ENCODE measurements at regions of chr1 and their contacts with region 1.

Region 1: DNA sequence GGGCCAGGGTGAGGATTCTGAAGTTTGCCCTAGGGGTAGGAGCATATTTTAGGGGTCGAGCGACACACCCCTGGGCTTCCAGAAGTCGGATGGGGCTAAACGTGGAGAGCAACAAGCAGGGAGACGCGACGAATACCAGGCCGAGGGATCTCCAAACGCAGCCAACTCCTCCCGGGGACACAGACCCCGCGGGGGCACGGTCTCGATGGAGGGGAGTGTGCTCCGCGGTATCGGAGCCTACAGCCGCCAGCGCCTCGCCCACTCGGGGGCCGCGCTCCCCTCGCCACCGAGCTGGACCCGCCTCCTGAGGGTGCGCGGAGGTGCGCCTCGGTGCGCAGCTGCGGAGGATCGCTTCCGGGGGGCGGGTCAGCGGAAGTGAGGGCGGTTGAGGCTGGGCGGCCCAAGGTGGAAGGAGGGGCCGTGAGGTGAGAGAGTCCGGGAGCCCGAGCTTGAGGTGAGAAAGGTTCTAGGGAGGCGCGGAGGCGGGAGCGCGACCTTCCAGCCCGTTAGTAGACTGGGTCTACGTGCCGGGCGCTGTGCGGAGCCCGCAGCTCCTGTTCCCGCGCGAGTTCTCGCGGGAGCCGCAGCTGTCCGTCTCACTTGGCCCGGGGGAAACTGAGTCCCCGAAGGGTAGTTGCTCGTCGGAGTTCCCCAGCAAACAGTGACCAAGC is at the start of gene MTFR1L:
- DNase-seq: peak; percentile 92 to 95 (median 95)
- ATAC-seq: peak; percentile 87 to 92 (median 88)
- H3K4me3 ChIP-seq: peak within 1 kb of the TSS; percentile 72 to 99 (median 94)
- H3K27ac ChIP-seq: peak within 1 kb of the TSS; percentile 73 to 97 (median 91)
- H3K4me1 ChIP-seq: peaks cover 0 to 32% (median 10%) of the 10 kb centered on the region in 4 donors
- H3K27me3 ChIP-seq: no peaks in the 10 kb centered on the region
- CTCF ChIP-seq: no peak
- POLR2A ChIP-seq: peak; percentile 84
- total RNA-seq, gene MTFR1L: 30.8 to 48.9 (median 43.3) TPM

Region 2: GRCh38 chr1:25529518-25530185 is 290.1 kb before region 1 on chr1:
- intact Hi-C with region 1: loop called in 1 of 2 experiments (anchors 10 kb)
- DNase-seq: no peak
- ATAC-seq: no peak
- H3K4me3 ChIP-seq: no peak overlapping the region
- H3K27ac ChIP-seq: no peak overlapping the region
- H3K4me1 ChIP-seq: no peaks in the 10 kb centered on the region
- H3K27me3 ChIP-seq: no peaks in the 10 kb centered on the region
- CTCF ChIP-seq: no peak
- POLR2A ChIP-seq: no peak

Region 3: DNA sequence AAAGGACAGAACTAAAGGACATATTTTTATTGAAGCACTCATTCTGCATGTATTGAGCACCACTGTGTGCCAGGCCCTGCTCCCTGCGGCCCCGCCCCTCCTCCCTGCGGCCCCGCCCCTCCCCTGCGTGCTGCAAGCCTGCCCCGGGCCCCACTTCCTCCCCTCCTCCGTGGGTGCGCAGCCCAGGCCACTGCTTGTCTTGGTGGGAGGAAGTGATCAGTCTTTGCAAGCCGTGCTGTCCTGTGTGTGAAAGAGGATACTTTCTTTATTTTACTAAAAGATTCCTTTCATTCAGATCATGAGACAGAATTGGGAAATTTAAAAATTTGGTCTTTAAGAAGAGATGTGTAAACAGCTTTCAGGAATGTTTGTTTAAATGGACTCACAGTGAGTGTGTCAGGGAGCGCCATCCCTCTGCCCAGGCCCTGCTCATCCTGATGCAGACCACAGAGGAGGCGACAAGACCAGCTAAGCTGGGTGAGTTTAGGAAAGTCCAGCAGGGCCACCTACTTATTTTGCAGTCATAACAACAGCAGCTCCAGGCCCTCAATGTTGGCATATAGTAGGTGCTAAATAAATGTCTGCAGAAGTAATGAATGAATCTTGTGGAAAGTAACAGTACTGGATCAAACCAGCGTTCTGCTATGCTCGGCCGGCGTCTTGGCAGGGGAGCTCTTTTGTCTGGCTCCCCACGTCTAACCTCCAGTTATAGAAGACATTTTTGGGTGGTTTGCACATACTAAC is 108.0 kb before region 1 on chr1:
- intact Hi-C with region 1: no loop called
- DNase-seq: peak in 1 of 3 donors; percentile 56
- ATAC-seq: peak; percentile 63 to 84 (median 74)
- H3K4me3 ChIP-seq: no peak overlapping the region
- H3K27ac ChIP-seq: no peak overlapping the region
- H3K4me1 ChIP-seq: peaks cover 0 to 5% (median 0%) of the 10 kb centered on the region in 4 donors
- H3K27me3 ChIP-seq: no peaks in the 10 kb centered on the region
- CTCF ChIP-seq: no peak
- POLR2A ChIP-seq: no peak

Measured in right lobe of liver (tissue), 6 donors.